Common myeloid progenitor, CD34-positive (primary cell): ENCODE measurements at regions of chr1 and their contacts with region 1.

Region 1: GRCh38 chr1:214328770-214329469 is 48.0 kb downstream of the SMYD2 start:
- DNase-seq: peak; percentile 64 to 84 (median 75)
- H3K4me3 ChIP-seq: no peak overlapping the region
- H3K27ac ChIP-seq: no peak overlapping the region
- H3K4me1 ChIP-seq: peaks cover 6 to 21% (median 12%) of the 10 kb centered on the region in 4 experiments
- H3K27me3 ChIP-seq: no peaks in the 10 kb centered on the region

Region 2: GRCh38 chr1:214135886-214136285 is 193.0 kb before region 1 on chr1:
- CTCF ChIA-PET with region 1: no interaction called
- POLR2A ChIA-PET with region 1: no interaction called
- DNase-seq: no peak
- H3K4me3 ChIP-seq: no peak overlapping the region
- H3K27ac ChIP-seq: no peak overlapping the region
- H3K4me1 ChIP-seq: no peaks in the 10 kb centered on the region
- H3K27me3 ChIP-seq: no peaks in the 10 kb centered on the region

Region 3: GRCh38 chr1:214213136-214213535 is 115.8 kb before region 1 on chr1:
- CTCF ChIA-PET with region 1: interaction called, 148 read pairs
- POLR2A ChIA-PET with region 1: interaction called, 3 read pairs
- DNase-seq: no peak
- H3K4me3 ChIP-seq: no peak overlapping the region
- H3K27ac ChIP-seq: no peak overlapping the region
- H3K4me1 ChIP-seq: peaks cover 0 to 6% (median 5%) of the 10 kb centered on the region in 4 experiments
- H3K27me3 ChIP-seq: peaks cover 0 to 12% (median 6%) of the 10 kb centered on the region in 5 experiments

Region 4: DNA sequence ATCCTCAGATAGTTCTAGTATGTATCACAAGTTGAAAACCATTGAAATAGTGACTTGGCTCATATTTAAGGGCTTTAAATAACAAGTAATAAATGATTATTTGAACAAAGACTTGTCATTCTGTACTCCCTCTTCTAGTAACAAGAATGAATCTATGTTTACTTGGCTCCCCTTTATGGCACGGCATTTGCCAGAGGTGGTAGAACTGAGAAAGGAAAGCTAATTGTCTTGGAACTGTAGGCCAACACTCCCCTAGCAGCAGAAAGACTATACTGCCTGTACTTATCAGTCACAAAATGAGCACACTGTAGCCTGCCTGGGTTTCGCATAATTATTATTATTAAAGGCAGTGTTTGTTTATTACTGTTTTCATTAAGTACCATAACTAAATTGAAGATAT is 77.6 kb before region 1 on chr1:
- CTCF ChIA-PET with region 1: interaction called, 277 read pairs
- POLR2A ChIA-PET with region 1: no interaction called
- DNase-seq: no peak
- H3K4me3 ChIP-seq: no peak overlapping the region
- H3K27ac ChIP-seq: no peak overlapping the region
- H3K4me1 ChIP-seq: no peaks in the 10 kb centered on the region
- H3K27me3 ChIP-seq: peaks cover 0 to 5% (median 0%) of the 10 kb centered on the region in 5 experiments

Region 5: DNA sequence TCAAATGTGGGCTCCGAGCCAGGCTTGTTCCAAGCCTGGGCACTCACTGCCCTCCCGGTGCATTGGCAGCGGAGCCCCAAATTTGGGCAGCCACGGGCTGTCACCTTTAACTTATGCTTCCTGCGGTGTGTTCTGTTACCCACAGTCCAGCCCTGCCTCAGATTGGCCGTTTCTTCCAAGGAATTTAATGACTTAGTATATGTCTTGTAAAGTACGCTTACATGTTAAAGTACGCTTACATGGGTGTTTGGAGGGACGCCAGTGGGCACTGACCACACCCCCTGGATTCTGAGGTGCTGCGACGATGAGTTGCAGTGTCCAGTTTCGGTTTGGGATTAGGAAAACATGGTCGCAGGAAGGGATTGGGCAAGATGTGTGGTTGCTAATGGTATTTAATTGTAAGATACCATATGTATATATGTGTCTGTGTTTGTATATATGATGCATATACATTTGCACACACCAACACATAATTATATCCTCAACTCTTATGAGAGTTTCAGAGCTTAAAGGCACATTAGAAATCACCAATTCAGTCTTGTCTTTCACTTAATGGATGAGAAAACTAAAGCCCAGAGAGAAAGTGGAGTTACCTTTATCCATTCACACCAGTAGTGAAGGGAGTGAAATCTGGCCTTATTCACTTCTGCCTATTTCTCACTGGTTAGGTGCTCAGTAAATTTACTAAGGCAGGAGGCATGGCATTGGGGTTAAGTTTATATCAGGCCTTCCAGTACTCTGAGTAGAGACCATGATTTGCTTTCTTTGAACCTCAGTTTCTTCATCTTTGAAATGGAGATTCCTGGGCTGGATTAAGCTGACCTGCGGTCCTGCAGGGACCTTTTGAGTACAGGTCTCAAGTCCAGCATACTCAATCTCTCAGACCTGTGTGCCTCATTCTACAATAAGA is 46.9 kb before region 1 on chr1:
- CTCF ChIA-PET with region 1: interaction called, 22 read pairs
- POLR2A ChIA-PET with region 1: no interaction called
- DNase-seq: peak in 1 of 3 donors; percentile 10
- H3K4me3 ChIP-seq: peak overlapping the region; percentile 31 to 93 (median 83)
- H3K27ac ChIP-seq: no peak overlapping the region
- H3K4me1 ChIP-seq: peaks cover 3 to 26% (median 17%) of the 10 kb centered on the region in 4 experiments
- H3K27me3 ChIP-seq: no peaks in the 10 kb centered on the region

Region 6: GRCh38 chr1:214316593-214316992 is 12.3 kb before region 1 on chr1:
- CTCF ChIA-PET with region 1: interaction called, 62 read pairs
- POLR2A ChIA-PET with region 1: no interaction called
- DNase-seq: no peak
- H3K4me3 ChIP-seq: no peak overlapping the region
- H3K27ac ChIP-seq: no peak overlapping the region
- H3K4me1 ChIP-seq: peaks cover 0 to 4% (median 2%) of the 10 kb centered on the region in 4 experiments
- H3K27me3 ChIP-seq: no peaks in the 10 kb centered on the region

Region 7: DNA sequence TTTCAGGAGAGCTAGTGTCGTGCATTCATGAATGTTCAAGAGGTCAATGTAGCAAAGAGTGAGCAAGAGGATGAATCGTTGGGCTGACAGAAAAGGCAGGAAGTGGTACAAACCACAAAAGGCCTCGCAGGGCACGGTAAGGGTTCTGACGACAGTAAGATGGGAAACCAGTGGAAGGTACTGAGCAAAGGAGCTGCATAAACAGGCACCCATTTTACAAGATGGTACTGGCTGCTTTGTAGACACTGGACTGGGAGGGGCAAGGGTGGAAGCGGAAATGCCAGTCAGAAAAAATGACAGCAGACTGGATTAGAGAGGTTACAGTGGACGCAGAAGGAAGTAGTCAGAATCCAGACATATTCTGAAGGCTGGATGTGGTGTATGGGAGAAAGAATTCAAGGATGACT is 99.0 kb after region 1 on chr1:
- CTCF ChIA-PET with region 1: no interaction called
- POLR2A ChIA-PET with region 1: no interaction called
- DNase-seq: peak; percentile 59 to 87 (median 85)
- H3K4me3 ChIP-seq: peak overlapping the region in 2 of 7 experiments; percentile 46 to 49
- H3K27ac ChIP-seq: peak overlapping the region in 1 of 2 experiments; percentile 31
- H3K4me1 ChIP-seq: peaks cover 12 to 48% (median 22%) of the 10 kb centered on the region in 4 experiments
- H3K27me3 ChIP-seq: no peaks in the 10 kb centered on the region

Region 8: GRCh38 chr1:214584805-214585766 is 256.2 kb after region 1 on chr1:
- CTCF ChIA-PET with region 1: interaction called, 84 read pairs
- POLR2A ChIA-PET with region 1: no interaction called
- DNase-seq: peak; percentile 20 to 51 (median 49)
- H3K4me3 ChIP-seq: no peak overlapping the region
- H3K27ac ChIP-seq: no peak overlapping the region
- H3K4me1 ChIP-seq: peaks cover 0 to 6% (median 2%) of the 10 kb centered on the region in 4 experiments
- H3K27me3 ChIP-seq: no peaks in the 10 kb centered on the region